PC-3 (cell line): ENCODE measurements at regions of chr21 and their contacts with region 1.

Region 1: DNA sequence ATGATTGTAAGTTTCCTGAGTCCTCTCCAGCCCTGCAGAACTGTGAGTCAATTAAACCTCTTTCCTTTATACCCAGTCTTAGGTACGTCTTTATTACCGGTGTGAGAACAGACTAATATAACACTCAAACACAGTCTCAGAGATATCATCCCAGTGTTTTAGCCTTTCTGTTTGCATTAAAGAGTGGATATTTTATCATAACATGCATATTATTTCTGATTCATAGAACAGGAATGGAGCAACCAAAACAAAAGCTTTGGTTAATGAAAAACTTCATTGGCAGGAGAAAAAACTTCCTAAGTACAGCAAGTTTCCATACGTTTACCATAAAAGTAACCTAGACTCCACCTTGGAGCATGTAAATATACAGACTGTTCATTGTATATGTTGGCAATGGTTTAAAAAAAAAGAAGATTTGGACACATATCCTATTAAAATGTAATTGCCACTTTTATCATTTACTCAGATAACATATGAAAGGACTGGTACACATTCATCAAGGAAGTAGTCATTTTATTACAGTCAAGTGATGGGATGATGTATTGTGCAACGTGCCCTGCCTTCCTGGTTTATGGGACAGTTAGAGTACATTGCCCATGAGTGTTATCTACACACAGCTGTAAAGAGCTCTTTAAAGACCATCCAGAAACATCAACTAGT is 144.8 kb downstream of the ETS2 start:
- DNase-seq: peak; percentile 48
- ATAC-seq: peak; percentile 86
- H3K4me3 ChIP-seq: no peak overlapping the region
- H3K27ac ChIP-seq: no peak overlapping the region
- H3K4me1 ChIP-seq: no peaks in the 10 kb centered on the region
- H3K27me3 ChIP-seq: no peaks in the 10 kb centered on the region
- CTCF ChIP-seq: no peak

Region 2: GRCh38 chr21:38699048-38699447 is 251.5 kb before region 1 on chr21:
- CTCF ChIA-PET with region 1: no interaction called
- POLR2A ChIA-PET with region 1: no interaction called
- intact Hi-C with region 1: no loop called
- DNase-seq: no peak
- ATAC-seq: no peak
- H3K4me3 ChIP-seq: no peak overlapping the region
- H3K27ac ChIP-seq: no peak overlapping the region
- H3K4me1 ChIP-seq: no peaks in the 10 kb centered on the region
- H3K27me3 ChIP-seq: peaks cover 42% of the 10 kb centered on the region
- CTCF ChIP-seq: peak; percentile 36; the same call in 1 of the 2 replicates

Region 3: DNA sequence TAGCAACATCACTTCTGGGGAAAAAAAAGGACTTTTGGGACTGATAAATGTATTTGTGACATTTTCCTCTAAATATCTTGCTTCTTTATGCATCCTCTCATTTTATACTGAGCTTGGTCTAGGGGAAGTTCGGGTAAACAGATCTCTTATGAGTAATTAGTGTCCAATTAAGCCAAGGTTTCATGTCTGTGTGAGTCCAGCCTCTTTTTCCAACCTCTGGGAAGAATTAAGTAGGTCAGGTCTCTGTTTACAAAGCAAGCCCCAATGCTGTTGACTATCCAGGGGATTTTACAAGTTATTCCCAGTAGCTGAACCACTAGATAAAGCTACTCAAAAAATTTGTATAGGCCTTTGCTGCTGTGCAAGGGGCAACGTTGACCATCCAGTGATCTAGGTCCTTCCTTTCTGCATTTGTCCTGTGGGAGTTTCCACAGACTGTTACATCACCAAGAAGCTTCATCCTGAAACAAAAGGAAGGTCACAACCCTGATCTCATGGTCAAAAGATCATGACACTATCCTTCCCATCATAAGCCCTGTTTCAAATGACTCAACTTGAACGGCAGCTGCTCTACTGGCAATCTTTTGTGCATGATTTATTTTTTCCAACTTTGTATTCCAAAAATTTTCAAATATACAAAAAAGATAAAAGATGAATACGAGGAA is 70.5 kb before region 1 on chr21:
- CTCF ChIA-PET with region 1: no interaction called
- POLR2A ChIA-PET with region 1: no interaction called
- intact Hi-C with region 1: loop called (anchors 2 kb)
- DNase-seq: no peak
- ATAC-seq: no peak
- H3K4me3 ChIP-seq: no peak overlapping the region
- H3K27ac ChIP-seq: no peak overlapping the region
- H3K4me1 ChIP-seq: peaks cover 7% of the 10 kb centered on the region; the same call in 1 of the 2 replicates
- H3K27me3 ChIP-seq: no peaks in the 10 kb centered on the region
- CTCF ChIP-seq: no peak

Region 4: GRCh38 chr21:38920631-38921398 is 29.8 kb before region 1 on chr21:
- CTCF ChIA-PET with region 1: no interaction called
- POLR2A ChIA-PET with region 1: no interaction called
- intact Hi-C with region 1: loop called (anchors 2 kb)
- DNase-seq: peak; percentile 78
- ATAC-seq: peak; percentile 45
- H3K4me3 ChIP-seq: peak overlapping the region; percentile 31; the same call in 1 of the 2 replicates
- H3K27ac ChIP-seq: peak overlapping the region; percentile 71
- H3K4me1 ChIP-seq: peaks cover 41% of the 10 kb centered on the region
- H3K27me3 ChIP-seq: no peaks in the 10 kb centered on the region
- CTCF ChIP-seq: no peak

Region 5: GRCh38 chr21:38979228-38980121 is 28.9 kb after region 1 on chr21:
- CTCF ChIA-PET with region 1: no interaction called
- POLR2A ChIA-PET with region 1: no interaction called
- intact Hi-C with region 1: no loop called
- DNase-seq: peak; percentile 35
- ATAC-seq: no peak
- H3K4me3 ChIP-seq: no peak overlapping the region
- H3K27ac ChIP-seq: no peak overlapping the region
- H3K4me1 ChIP-seq: peaks cover 5% of the 10 kb centered on the region; the same call in 1 of the 2 replicates
- H3K27me3 ChIP-seq: no peaks in the 10 kb centered on the region
- CTCF ChIP-seq: no peak

Region 6: GRCh38 chr21:38993561-38993960 is 43.0 kb after region 1 on chr21:
- CTCF ChIA-PET with region 1: no interaction called
- POLR2A ChIA-PET with region 1: no interaction called
- intact Hi-C with region 1: loop called (anchors 5 kb)
- DNase-seq: peak; percentile 94
- ATAC-seq: peak; percentile 74
- H3K4me3 ChIP-seq: no peak overlapping the region
- H3K27ac ChIP-seq: no peak overlapping the region
- H3K4me1 ChIP-seq: peaks cover 27% of the 10 kb centered on the region
- H3K27me3 ChIP-seq: no peaks in the 10 kb centered on the region
- CTCF ChIP-seq: no peak